B cell (primary cell): ENCODE measurements at regions of chr7 and their contacts with region 1.

Region 1: DNA sequence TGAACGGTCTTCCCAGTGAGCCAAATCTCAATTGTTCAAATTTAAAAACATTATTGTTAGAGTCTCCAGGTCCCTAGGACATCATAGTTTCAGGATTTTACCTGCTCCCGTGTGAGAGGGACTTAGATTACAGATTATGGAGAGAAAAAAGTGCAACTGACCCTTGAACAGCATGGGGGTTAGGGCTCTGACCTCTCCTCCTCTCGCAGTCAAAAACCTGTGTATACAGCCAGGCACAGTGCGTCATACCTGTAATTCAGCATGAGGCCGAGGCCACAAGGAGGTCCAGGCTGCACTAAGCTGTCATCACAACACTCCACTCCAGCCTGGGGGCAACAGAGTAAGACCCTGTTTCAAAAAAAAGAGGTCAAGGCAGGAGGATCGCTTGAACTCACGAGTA is 25.5 kb downstream of the BAZ1B start:
- DNase-seq: no peak
- ATAC-seq: no peak
- H3K4me3 ChIP-seq: no peak overlapping the region
- H3K4me3 Mint-ChIP-seq: no peak overlapping the region
- H3K27ac ChIP-seq: no peak overlapping the region
- H3K27ac Mint-ChIP-seq: no peak overlapping the region
- H3K4me1 ChIP-seq: no peaks in the 10 kb centered on the region
- H3K4me1 Mint-ChIP-seq: no peaks in the 10 kb centered on the region
- H3K27me3 ChIP-seq: no peaks in the 10 kb centered on the region
- H3K27me3 Mint-ChIP-seq: no peaks in the 10 kb centered on the region
- CTCF ChIP-seq: no peak

Region 2: GRCh38 chr7:73515178-73515577 is 18.6 kb after region 1 on chr7:
- CTCF ChIA-PET with region 1: no interaction called
- POLR2A ChIA-PET with region 1: no interaction called
- intact Hi-C with region 1: loop called (anchors 1 kb)
- DNase-seq: no peak
- ATAC-seq: no peak
- H3K4me3 ChIP-seq: no peak overlapping the region
- H3K4me3 Mint-ChIP-seq: no peak overlapping the region
- H3K27ac ChIP-seq: no peak overlapping the region
- H3K27ac Mint-ChIP-seq: no peak overlapping the region
- H3K4me1 ChIP-seq: peaks cover 15 to 21% of the 10 kb centered on the region in 2 donors
- H3K4me1 Mint-ChIP-seq: peaks cover 38% of the 10 kb centered on the region
- H3K27me3 ChIP-seq: no peaks in the 10 kb centered on the region
- H3K27me3 Mint-ChIP-seq: no peaks in the 10 kb centered on the region
- CTCF ChIP-seq: no peak